ENCODE measurements at regions of chr2 and their contacts with region 1.

Region 1: GRCh38 chr2:25078171-25079049 is 36.5 kb downstream of the EFR3B start:
- H3K4me3 ChIP-seq: peak overlapping the region; percentile 4; the same call in 1 of the 2 replicates
- H3K27ac ChIP-seq: peak overlapping the region; percentile 8; the same call in 1 of the 2 replicates
- H3K4me1 ChIP-seq: peaks cover 21% of the 10 kb centered on the region
- CTCF ChIP-seq: no peak

Region 2: DNA sequence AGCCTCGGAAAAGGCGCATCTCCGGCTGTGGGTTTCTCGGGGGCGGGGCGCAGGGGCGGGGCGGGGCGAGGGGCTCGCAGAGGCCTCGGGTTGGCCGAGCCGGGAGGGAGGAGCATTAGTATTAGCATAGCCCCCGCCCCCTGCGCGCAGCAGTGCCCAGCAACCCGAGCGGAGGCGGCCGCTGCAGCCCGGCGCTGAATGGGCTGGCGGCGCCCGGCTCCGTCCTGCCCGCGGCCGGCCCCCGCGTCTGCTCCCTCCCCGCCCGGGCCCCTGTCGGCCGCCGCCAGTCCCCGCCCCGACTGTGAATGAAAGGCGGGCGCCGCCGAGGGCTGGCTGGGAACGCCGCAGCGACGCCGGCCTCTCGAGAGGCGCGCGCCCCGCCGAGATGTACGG is 36.5 kb before region 1 on chr2 and contains the start of gene EFR3B:
- CTCF ChIA-PET with region 1: interaction called, 4 read pairs
- POLR2A ChIA-PET with region 1: interaction called, 12 read pairs
- H3K4me3 ChIP-seq: peak within 1 kb of the TSS; percentile 72
- H3K27ac ChIP-seq: peak within 1 kb of the TSS; percentile 79
- H3K4me1 ChIP-seq: peaks cover 10% of the 10 kb centered on the region
- CTCF ChIP-seq: no peak

Region 3: GRCh38 chr2:25098670-25099486 is 20.5 kb after region 1 on chr2:
- CTCF ChIA-PET with region 1: no interaction called
- POLR2A ChIA-PET with region 1: no interaction called
- H3K4me3 ChIP-seq: no peak overlapping the region
- H3K27ac ChIP-seq: no peak overlapping the region
- H3K4me1 ChIP-seq: no peaks in the 10 kb centered on the region
- CTCF ChIP-seq: no peak

Region 4: DNA sequence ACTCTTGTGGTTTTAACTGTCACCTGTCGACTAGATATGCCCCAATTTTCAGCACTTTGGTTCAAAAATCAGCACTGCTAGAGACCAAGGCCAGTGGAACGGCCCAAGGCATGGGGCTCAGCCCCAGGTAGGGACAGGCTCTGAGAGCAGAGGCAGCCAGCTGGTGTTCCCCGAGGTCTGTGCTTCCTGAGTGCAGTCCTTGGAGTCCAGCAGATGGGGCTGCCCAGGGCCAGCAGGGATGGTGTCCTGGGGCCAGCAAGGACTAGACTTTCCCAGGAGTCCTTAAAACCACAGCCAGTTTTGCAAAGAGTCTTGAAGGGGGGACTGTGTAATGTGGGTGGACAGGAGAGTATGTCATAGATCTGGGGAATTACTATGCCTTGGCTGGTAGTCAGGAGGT is 33.7 kb after region 1 on chr2:
- CTCF ChIA-PET with region 1: no interaction called
- POLR2A ChIA-PET with region 1: no interaction called
- H3K4me3 ChIP-seq: no peak overlapping the region
- H3K27ac ChIP-seq: no peak overlapping the region
- H3K4me1 ChIP-seq: no peaks in the 10 kb centered on the region
- CTCF ChIP-seq: no peak

Measured in HEK293 (cell line).